Activated T-helper 1 cell treated with anti-CD3 and anti-CD28 coated beads, Interleukin-12 subunit alpha, Interleukin-12 subunit beta, Interleukin-2, Interleukin-4 antibody, amounts not matched to agents 30 ng/mL and 10 ng/mL and 1 ng/mL, durations not matched to agents 14 hours and 24 hours and 36 hours (primary cell): ENCODE measurements at regions of chr1 and their contacts with region 1.

Region 1: GRCh38 chr1:7948960-7949359 is 8.3 kb upstream of the TNFRSF9 start:
- DNase-seq: peak; percentile 38
- H3K4me3 Mint-ChIP-seq: peak overlapping the region; percentile 48
- H3K27ac Mint-ChIP-seq: peak overlapping the region; percentile 81
- H3K4me1 Mint-ChIP-seq: peaks cover 42% of the 10 kb centered on the region
- H3K27me3 Mint-ChIP-seq: peaks cover 2% of the 10 kb centered on the region

Region 2: GRCh38 chr1:7847599-7847998 is 101.4 kb before region 1 on chr1:
- intact Hi-C with region 1: no loop called
- DNase-seq: no peak
- H3K4me3 Mint-ChIP-seq: no peak overlapping the region
- H3K27ac Mint-ChIP-seq: no peak overlapping the region
- H3K4me1 Mint-ChIP-seq: no peaks in the 10 kb centered on the region
- H3K27me3 Mint-ChIP-seq: peaks cover 1% of the 10 kb centered on the region

Region 3: DNA sequence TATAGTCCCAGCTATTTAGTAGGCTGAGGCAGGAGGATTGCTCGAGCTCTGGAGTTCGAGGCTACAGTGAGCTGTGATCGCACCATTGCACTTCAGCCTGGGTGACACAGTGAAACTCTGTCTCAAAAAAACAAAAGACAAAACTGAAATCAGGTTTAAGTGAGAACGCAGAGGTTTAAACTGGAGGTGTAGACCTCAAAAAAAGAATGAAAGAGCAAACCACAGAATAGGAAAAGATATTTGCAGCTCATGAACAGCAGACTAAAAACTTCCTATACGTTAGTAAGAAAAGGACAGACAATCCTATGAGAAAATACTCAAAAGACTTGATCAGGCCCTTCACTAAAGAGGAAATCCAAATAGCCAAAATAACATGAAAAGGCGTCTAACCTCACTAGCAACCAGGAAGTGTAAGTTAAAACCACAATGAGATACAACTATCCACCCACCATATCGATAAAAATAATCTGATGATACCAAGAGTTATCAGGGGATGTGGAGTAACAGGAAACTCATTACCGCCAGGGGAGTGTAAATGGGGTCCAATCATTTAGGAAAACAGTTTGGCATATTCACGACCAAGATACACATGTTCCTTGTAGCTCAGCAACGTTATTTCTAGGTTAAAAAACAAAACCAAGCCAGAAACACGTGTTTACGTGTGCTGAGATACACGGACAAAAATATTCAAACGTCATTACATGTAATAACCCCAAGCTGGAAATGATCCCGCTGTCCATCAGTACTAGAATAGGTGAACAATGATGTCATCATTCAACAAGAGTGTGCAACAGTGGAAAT is 18.1 kb before region 1 on chr1:
- intact Hi-C with region 1: loop called (anchors 1 kb)
- DNase-seq: no peak
- H3K4me3 Mint-ChIP-seq: peak overlapping the region; percentile 56
- H3K27ac Mint-ChIP-seq: peak overlapping the region; percentile 89
- H3K4me1 Mint-ChIP-seq: peaks cover 38% of the 10 kb centered on the region
- H3K27me3 Mint-ChIP-seq: peaks cover 6% of the 10 kb centered on the region